Activated CD4-positive, alpha-beta T cell treated with anti-CD3 and anti-CD28 coated beads, Interleukin-2, amount 10 ng/mL, durations not matched to agents 7 days and 5 days (primary cell): ENCODE measurements at regions of chr3 and their contacts with region 1.

Region 1: GRCh38 chr3:11288786-11289682 is 16.8 kb downstream of the ATG7 start:
- DNase-seq: no peak
- H3K4me3 Mint-ChIP-seq: no peak overlapping the region
- H3K27ac Mint-ChIP-seq: peak overlapping the region; percentile 39
- H3K4me1 Mint-ChIP-seq: peaks cover 51% of the 10 kb centered on the region
- H3K27me3 Mint-ChIP-seq: no peaks in the 10 kb centered on the region

Region 2: GRCh38 chr3:11271986-11272904 is 16.8 kb before region 1 on chr3 and contains the start of gene ATG7:
- CTCF ChIA-PET with region 1: interaction called, 17 read pairs
- POLR2A ChIA-PET with region 1: interaction called, 5 read pairs
- DNase-seq: peak; percentile 96
- H3K4me3 Mint-ChIP-seq: peak within 1 kb of the TSS; percentile 83
- H3K27ac Mint-ChIP-seq: peak within 1 kb of the TSS; percentile 93
- H3K4me1 Mint-ChIP-seq: peaks cover 48% of the 10 kb centered on the region
- H3K27me3 Mint-ChIP-seq: no peaks in the 10 kb centered on the region
- total RNA-seq, gene ATG7: 29.5 to 34.2 TPM